ENCODE measurements at regions of chr3 and their contacts with region 1.

Region 1: DNA sequence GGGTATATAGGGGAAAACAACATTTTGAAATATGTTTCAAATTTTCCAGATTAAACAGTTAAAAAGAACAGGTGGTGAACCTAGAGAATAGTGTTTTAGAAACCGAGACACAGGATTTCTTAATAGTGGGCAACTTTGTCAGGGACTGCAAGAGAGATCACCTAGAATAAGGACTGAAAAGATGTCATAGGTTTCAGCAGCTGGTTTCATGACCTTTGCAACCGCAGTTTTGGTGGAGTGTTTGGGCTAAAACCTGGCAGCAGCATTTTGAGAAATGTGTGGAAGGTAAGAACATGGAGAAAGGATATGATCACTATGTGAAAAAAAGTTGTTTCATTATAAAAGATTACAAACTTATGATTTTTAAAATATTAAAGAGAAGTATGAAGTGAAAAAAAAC is 34.9 kb downstream of the PRKCI start:
- DNase-seq: peak; percentile 59
- ATAC-seq: peak; percentile 66
- H3K4me3 Mint-ChIP-seq: no peak overlapping the region
- H3K27ac Mint-ChIP-seq: peak overlapping the region; percentile 58
- H3K4me1 Mint-ChIP-seq: peaks cover 43% of the 10 kb centered on the region
- H3K27me3 Mint-ChIP-seq: no peaks in the 10 kb centered on the region

Region 2: GRCh38 chr3:169489775-169490546 is 767.2 kb before region 1 on chr3:
- CTCF ChIA-PET with region 1: no interaction called
- POLR2A ChIA-PET with region 1: no interaction called
- intact Hi-C with region 1: no loop called
- DNase-seq: no peak
- ATAC-seq: no peak
- H3K4me3 Mint-ChIP-seq: no peak overlapping the region
- H3K27ac Mint-ChIP-seq: no peak overlapping the region
- H3K4me1 Mint-ChIP-seq: no peaks in the 10 kb centered on the region
- H3K27me3 Mint-ChIP-seq: peaks cover 1% of the 10 kb centered on the region

Region 3: DNA sequence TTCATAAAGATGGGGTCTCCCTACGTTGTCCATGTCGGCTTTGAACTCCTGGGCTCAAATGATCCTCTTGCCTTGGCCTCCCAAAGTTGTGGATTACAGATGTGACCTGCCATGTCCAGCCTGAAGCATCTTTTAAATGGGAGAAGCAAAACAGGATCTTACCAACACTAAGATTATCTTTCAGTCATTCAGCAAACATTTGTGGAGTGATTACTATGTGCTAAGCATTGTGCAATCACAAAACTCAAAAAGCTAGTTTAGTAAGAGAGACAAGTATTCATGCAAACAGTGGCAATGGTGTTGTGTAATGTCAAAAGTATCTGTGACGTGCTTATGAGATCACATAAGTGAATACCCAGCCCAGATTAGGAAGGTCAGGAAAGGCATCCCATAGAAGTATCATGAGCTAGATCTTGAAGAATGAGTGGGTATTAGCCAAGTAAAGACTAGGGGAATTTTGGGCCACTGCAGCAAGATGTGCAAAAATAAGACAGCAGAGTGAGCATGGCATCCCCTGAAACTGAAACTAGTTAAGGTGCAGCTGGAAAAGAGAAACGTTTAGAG is 258.5 kb before region 1 on chr3:
- CTCF ChIA-PET with region 1: no interaction called
- POLR2A ChIA-PET with region 1: no interaction called
- intact Hi-C with region 1: loop called in 1 of 2 experiments (anchors 2 kb)
- DNase-seq: peak; percentile 24
- ATAC-seq: peak; percentile 61
- H3K4me3 Mint-ChIP-seq: no peak overlapping the region
- H3K27ac Mint-ChIP-seq: peak overlapping the region; percentile 89
- H3K4me1 Mint-ChIP-seq: peaks cover 35% of the 10 kb centered on the region
- H3K27me3 Mint-ChIP-seq: no peaks in the 10 kb centered on the region

Region 4: DNA sequence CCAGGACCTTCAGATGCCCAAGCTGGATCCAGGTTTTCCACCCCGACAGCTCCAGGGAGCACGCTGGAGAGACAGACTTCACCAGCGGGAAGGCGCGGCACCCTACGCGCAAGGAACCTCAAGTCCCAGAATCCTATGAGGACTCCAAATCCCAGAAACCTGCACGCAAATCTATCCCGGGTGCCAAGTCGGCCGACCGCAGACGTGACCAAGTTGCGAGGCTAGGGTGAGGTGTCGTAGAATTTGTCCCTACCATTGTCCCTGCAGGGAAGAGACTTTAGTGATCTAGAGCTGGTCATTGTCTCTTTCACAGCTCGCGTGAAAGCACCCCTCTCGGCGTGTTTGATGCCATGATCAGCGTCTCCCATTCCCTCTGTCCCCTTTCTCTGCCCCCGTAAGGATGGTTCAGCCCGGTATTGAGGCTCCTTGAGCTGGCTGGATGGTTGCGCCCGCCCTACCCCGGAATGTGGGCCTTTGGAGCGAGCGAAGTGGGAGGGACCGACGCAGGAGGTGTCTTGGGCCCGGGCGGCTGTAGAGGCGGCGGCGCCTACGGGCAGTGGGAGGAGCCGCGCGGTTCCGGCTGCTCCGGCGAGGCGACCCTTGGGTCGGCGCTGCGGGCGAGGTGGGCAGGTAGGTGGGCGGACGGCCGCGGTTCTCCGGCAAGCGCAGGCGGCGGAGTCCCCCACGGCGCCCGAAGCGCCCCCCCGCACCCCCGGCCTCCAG is 35.1 kb before region 1 on chr3 and contains the start of gene PRKCI:
- CTCF ChIA-PET with region 1: interaction called, 3 read pairs
- POLR2A ChIA-PET with region 1: interaction called, 3 read pairs
- intact Hi-C with region 1: loop called (anchors 1 to 2 kb)
- DNase-seq: peak; percentile 95
- ATAC-seq: peak; percentile 95
- H3K4me3 Mint-ChIP-seq: peak within 1 kb of the TSS; percentile 89
- H3K27ac Mint-ChIP-seq: peak within 1 kb of the TSS; percentile 95
- H3K4me1 Mint-ChIP-seq: peaks cover 32% of the 10 kb centered on the region
- H3K27me3 Mint-ChIP-seq: no peaks in the 10 kb centered on the region
- total RNA-seq, gene PRKCI: 32.3 to 33.0 TPM